ENCODE measurements at regions of chr6 and their contacts with region 1.

Region 1: GRCh38 chr6:107820338-107821261 is 3.5 kb downstream of the SCML4 start:
- DNase-seq: peak; percentile 60
- ATAC-seq: no peak
- H3K4me3 Mint-ChIP-seq: peak overlapping the region; percentile 87
- H3K27ac Mint-ChIP-seq: peak overlapping the region; percentile 98
- H3K4me1 Mint-ChIP-seq: peaks cover 84% of the 10 kb centered on the region
- H3K27me3 Mint-ChIP-seq: no peaks in the 10 kb centered on the region

Region 2: GRCh38 chr6:107731422-107732319 is 88.9 kb before region 1 on chr6:
- CTCF ChIA-PET with region 1: interaction called, 9 read pairs
- POLR2A ChIA-PET with region 1: interaction called, 5 read pairs
- intact Hi-C with region 1: loop called (anchors 1 to 2 kb)
- DNase-seq: peak; percentile 46
- ATAC-seq: peak; percentile 20
- H3K4me3 Mint-ChIP-seq: peak overlapping the region; percentile 79
- H3K27ac Mint-ChIP-seq: peak overlapping the region; percentile 91
- H3K4me1 Mint-ChIP-seq: peaks cover 82% of the 10 kb centered on the region
- H3K27me3 Mint-ChIP-seq: no peaks in the 10 kb centered on the region

Region 3: DNA sequence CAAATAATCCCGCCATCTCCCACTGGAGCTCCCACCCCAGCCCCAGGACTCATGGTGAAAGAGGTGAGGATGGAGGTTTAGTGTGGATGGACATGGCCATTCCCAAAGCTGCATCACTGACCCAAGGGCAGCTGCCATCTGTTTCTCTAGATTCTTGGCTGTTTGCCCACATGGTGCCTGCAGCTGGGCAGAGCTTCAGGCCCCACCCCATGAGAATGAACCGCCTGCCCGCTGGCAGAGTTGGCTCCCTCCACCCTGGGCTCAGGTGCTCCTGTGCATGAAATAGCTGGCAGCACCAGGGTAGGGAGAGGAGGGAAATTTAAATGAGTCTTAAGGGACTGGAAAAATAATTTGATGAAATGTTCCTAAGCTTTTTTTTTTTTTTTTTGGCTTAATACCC is 13.9 kb before region 1 on chr6:
- CTCF ChIA-PET with region 1: interaction called, 26 read pairs
- POLR2A ChIA-PET with region 1: interaction called, 6 read pairs
- intact Hi-C with region 1: loop called in 1 of 2 experiments (anchors 1 kb)
- DNase-seq: no peak
- ATAC-seq: no peak
- H3K4me3 Mint-ChIP-seq: no peak overlapping the region
- H3K27ac Mint-ChIP-seq: no peak overlapping the region
- H3K4me1 Mint-ChIP-seq: peaks cover 62% of the 10 kb centered on the region
- H3K27me3 Mint-ChIP-seq: no peaks in the 10 kb centered on the region

Region 4: GRCh38 chr6:107964671-107965340 is 144.2 kb after region 1 on chr6:
- CTCF ChIA-PET with region 1: interaction called, 3 read pairs
- POLR2A ChIA-PET with region 1: interaction called, 4 read pairs
- intact Hi-C with region 1: loop called in 1 of 2 experiments (anchors 2 kb)
- DNase-seq: peak; percentile 90
- ATAC-seq: peak; percentile 96
- H3K4me3 Mint-ChIP-seq: no peak overlapping the region
- H3K27ac Mint-ChIP-seq: peak overlapping the region; percentile 88
- H3K4me1 Mint-ChIP-seq: peaks cover 25% of the 10 kb centered on the region
- H3K27me3 Mint-ChIP-seq: peaks cover 2% of the 10 kb centered on the region

Measured in activated CD4-positive, alpha-beta T cell treated with anti-CD3 and anti-CD28 coated beads for 36 hours (primary cell).